Activated naive CD8-positive, alpha-beta T cell treated with anti-CD3 and anti-CD28 coated beads, Interleukin-2, amount 10 ng/mL, durations not matched to agents 7 days and 5 days (primary cell): ENCODE measurements at regions of chr9 and their contacts with region 1.

Region 1: DNA sequence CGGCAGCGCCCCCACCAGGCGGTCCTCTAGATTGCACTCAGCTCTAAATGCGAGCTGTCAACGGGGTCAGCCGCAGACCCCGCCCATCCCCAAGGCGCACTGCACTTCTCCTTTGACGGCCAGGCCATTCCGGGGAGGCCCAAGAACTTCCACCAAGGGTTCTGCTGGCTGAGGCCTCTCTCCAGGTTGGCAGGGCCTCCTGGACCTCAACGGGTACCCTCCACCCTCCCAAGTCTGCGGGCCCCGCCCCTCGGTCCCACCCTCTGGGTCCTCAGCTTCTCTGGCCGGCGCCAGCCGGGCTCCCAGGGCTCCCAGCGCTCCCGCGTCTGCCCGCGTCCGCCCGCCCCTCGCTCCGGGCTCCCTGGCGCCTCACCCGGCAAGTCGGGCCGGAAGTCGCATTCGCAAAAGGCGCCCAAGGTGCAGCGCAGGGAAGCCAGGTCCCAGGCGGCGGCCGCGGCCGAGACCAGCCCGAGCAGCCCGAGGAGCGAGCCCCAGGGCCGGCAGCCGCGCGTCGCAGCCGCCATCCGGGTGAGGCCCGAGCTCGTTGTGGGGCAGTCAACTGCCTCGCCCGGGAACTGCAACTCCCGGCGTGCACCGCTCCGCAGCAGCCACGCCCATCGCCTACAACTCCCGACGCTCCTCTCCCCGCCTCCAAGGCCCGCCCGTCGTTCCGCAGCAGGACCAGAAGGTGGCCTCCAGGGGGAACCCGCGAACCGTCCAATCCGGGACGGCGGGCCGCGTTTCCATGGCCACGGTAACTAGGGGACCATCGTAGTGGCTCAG is at the start of gene TOR2A:
- DNase-seq: peak; percentile 98
- ATAC-seq: peak; percentile 88
- H3K4me3 Mint-ChIP-seq: peak within 1 kb of the TSS; percentile 87
- H3K27ac Mint-ChIP-seq: peak within 1 kb of the TSS; percentile 93
- H3K4me1 Mint-ChIP-seq: peaks cover 14% of the 10 kb centered on the region
- H3K27me3 Mint-ChIP-seq: no peaks in the 10 kb centered on the region
- total RNA-seq, gene TOR2A: 21.7 to 24.4 TPM

Region 2: GRCh38 chr9:127589955-127590370 is 145.0 kb before region 1 on chr9:
- POLR2A ChIA-PET with region 1: interaction called, 13 read pairs
- DNase-seq: no peak
- ATAC-seq: peak; percentile 57
- H3K4me3 Mint-ChIP-seq: no peak overlapping the region
- H3K27ac Mint-ChIP-seq: no peak overlapping the region
- H3K4me1 Mint-ChIP-seq: peaks cover 5% of the 10 kb centered on the region
- H3K27me3 Mint-ChIP-seq: peaks cover 22% of the 10 kb centered on the region

Region 3: DNA sequence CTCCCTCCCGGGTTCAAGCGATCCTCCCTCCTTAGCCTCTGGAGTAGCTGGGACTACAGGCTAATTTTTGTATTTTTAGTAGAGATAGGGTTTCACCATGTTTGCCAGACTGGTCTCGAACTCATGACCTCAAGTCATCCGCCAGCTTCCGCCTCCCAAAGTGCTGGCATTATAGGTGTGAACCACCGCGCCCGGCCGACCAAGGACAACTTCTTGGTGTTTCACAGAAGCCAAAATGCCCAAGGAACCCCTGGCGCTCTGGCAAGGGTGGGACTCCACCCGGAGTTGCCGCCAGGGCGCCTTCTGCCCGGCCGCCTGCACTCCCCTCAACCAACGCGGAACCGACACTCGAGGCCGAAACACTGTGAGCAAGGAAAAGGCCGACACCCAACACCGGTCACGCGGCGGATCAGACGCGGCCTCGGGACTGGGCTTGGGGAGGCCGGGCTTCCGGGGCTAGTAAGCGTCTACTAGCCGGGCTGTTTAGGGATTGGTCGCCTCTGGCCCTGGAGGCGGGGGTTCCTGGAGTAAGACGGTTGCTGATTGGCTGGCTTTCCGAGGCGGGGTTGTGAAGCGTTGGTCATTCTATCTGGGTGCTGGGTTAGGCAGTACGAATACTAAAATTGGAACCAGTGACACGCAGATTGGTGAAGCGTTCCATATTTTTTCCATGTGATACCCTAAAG is 35.8 kb before region 1 on chr9:
- POLR2A ChIA-PET with region 1: no interaction called
- DNase-seq: peak; percentile 85
- ATAC-seq: peak; percentile 100
- H3K4me3 Mint-ChIP-seq: peak overlapping the region; percentile 82
- H3K27ac Mint-ChIP-seq: peak overlapping the region; percentile 79
- H3K4me1 Mint-ChIP-seq: peaks cover 12% of the 10 kb centered on the region
- H3K27me3 Mint-ChIP-seq: no peaks in the 10 kb centered on the region

Region 4: GRCh38 chr9:127715394-127716337 is 19.3 kb before region 1 on chr9 and contains the starts of genes PTRH1 and TTC16:
- POLR2A ChIA-PET with region 1: interaction called, 10 read pairs
- DNase-seq: peak; percentile 98
- ATAC-seq: peak; percentile 92
- H3K4me3 Mint-ChIP-seq: peak within 1 kb of the TSS; percentile 97
- H3K27ac Mint-ChIP-seq: peak within 1 kb of the TSS; percentile 92
- H3K4me1 Mint-ChIP-seq: peaks cover 29% of the 10 kb centered on the region
- H3K27me3 Mint-ChIP-seq: no peaks in the 10 kb centered on the region
- total RNA-seq, gene PTRH1: 9.9 to 13.1 TPM
- total RNA-seq, gene TTC16: 4.4 to 5.3 TPM

Region 5: GRCh38 chr9:127916665-127917613 is 182.0 kb after region 1 on chr9 and contains the start of gene ST6GALNAC4:
- POLR2A ChIA-PET with region 1: interaction called, 12 read pairs
- DNase-seq: peak; percentile 97
- ATAC-seq: peak; percentile 90
- H3K4me3 Mint-ChIP-seq: peak within 1 kb of the TSS; percentile 96
- H3K27ac Mint-ChIP-seq: peak within 1 kb of the TSS; percentile 96
- H3K4me1 Mint-ChIP-seq: peaks cover 41% of the 10 kb centered on the region
- H3K27me3 Mint-ChIP-seq: no peaks in the 10 kb centered on the region
- total RNA-seq, gene ST6GALNAC4: 51.1 to 59.5 TPM